GM12878 (cell line): ENCODE measurements at regions of chr17 and their contacts with region 1.

Region 1: GRCh38 chr17:53106886-53107285 is 715.8 kb upstream of the KIF2B start:
- DNase-seq: no peak
- ATAC-seq: no peak
- H3K4me3 ChIP-seq: no peak overlapping the region
- H3K27ac ChIP-seq: no peak overlapping the region
- H3K4me1 ChIP-seq: no peaks in the 10 kb centered on the region
- H3K27me3 ChIP-seq: no peaks in the 10 kb centered on the region
- CTCF ChIP-seq: no peak
- EP300 ChIP-seq: no peak
- POLR2A ChIP-seq: no peak
- RAD21 ChIP-seq: no peak

Region 2: GRCh38 chr17:53061446-53061845 is 45.4 kb before region 1 on chr17:
- CTCF ChIA-PET with region 1: no interaction called
- POLR2A ChIA-PET with region 1: no interaction called
- RAD21 ChIA-PET with region 1: no interaction called
- SMC1A ChIA-PET with region 1: no interaction called
- in situ Hi-C with region 1: no loop called
- intact Hi-C with region 1: no loop called
- DNase-seq: no peak
- ATAC-seq: no peak
- H3K4me3 ChIP-seq: no peak overlapping the region
- H3K27ac ChIP-seq: no peak overlapping the region
- H3K4me1 ChIP-seq: no peaks in the 10 kb centered on the region
- H3K27me3 ChIP-seq: no peaks in the 10 kb centered on the region
- CTCF ChIP-seq: no peak
- EP300 ChIP-seq: no peak
- POLR2A ChIP-seq: no peak
- RAD21 ChIP-seq: no peak

Region 3: GRCh38 chr17:53166731-53167130 is 59.8 kb after region 1 on chr17:
- CTCF ChIA-PET with region 1: no interaction called
- POLR2A ChIA-PET with region 1: no interaction called
- RAD21 ChIA-PET with region 1: no interaction called
- SMC1A ChIA-PET with region 1: no interaction called
- in situ Hi-C with region 1: loop called (anchors 5 kb)
- intact Hi-C with region 1: no loop called
- DNase-seq: no peak
- ATAC-seq: no peak
- H3K4me3 ChIP-seq: no peak overlapping the region
- H3K27ac ChIP-seq: no peak overlapping the region
- H3K4me1 ChIP-seq: no peaks in the 10 kb centered on the region
- H3K27me3 ChIP-seq: no peaks in the 10 kb centered on the region
- CTCF ChIP-seq: no peak
- EP300 ChIP-seq: no peak
- POLR2A ChIP-seq: no peak
- RAD21 ChIP-seq: no peak